ENCODE measurements at regions of chr11 and their contacts with region 1.

Region 1: DNA sequence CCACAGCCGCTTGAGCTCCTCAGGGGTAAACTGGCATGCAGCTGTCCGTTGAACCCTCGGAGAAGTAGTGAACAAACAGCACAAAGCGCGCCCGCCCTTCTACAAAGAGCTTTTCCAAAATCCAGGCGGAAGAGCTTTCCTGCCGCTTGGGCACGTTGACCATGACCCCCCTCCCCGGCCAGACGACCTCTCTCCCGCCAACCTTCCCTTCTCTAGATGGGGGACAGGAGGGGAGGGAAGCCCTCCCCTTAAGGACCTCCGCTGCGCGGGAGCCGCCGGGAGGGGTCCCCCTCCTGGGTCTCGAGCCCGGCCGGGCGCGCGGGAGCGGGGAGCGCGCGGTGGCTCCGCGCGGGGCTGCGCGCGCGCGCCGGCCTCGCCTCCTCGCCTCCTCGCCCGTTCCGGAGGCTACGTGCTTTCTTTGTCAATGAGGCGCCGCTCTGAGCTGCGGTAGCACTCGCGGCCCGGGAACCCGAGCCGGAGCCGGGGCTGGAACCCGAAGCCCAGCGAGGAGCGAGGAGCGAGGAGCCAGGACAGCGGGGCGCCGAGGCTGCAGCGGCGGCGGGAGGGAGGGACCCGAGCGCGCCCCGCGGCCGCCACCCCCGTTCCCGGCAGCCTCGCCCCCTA is 118.6 kb downstream of the HIPK3 start:
- DNase-seq: no peak
- CTCF ChIP-seq: no peak

Region 2: DNA sequence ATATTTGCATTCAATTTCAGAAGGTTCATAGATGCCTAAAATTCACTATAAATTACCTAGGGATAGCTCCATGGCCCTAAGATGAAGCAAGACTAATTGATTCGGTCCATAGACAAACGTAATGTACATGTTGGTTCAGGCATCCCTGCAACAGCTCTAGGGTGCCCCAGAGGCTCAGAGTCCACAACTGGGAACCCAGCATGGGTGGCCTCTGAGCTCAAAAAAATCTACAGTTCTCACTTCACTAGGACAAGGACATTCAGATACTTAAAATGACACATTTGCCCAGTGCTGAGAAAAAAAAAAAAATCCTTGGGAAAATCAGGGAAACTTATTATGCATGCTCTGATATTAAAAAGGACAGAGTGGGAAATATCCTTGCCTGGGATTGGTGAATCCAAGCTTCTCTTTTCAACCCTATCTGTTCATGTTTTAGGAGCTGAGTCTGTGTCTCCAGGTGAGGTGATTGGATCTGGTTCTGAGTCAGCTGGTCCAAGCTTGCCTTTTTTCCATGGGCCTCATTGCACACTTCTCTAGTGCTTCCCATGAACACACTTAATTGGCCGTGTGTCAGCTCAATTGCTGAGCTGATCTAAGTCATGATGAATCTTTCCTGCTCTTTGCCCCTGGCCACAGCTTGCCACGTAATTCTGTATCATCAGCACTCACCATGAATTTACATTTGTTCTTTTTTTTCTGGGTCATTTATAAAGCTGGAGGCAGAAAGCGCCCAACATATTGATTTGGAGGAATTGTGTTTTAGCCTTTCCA is 1401.2 kb before region 1 on chr11:
- in situ Hi-C with region 1: no loop called
- DNase-seq: no peak
- CTCF ChIP-seq: no peak

Region 3: GRCh38 chr11:33742249-33742851 is 366.6 kb after region 1 on chr11:
- in situ Hi-C with region 1: loop called (anchors 10 kb)
- DNase-seq: no peak
- CTCF ChIP-seq: peak; percentile 15